Activated T-helper 1 cell treated with anti-CD3 and anti-CD28 coated beads, Interleukin-12 subunit alpha, Interleukin-12 subunit beta, Interleukin-2, Interleukin-4 antibody, amounts not matched to agents 30 ng/mL and 10 ng/mL and 1 ng/mL, durations not matched to agents 14 hours and 24 hours and 36 hours (primary cell): ENCODE measurements at regions of chrX and their contacts with region 1.

Region 1: GRCh38 chrX:73855546-73855945 is 292.5 kb downstream of the CHIC1 start:
- DNase-seq: peak; percentile 20
- H3K4me3 Mint-ChIP-seq: no peak overlapping the region
- H3K27ac Mint-ChIP-seq: no peak overlapping the region
- H3K4me1 Mint-ChIP-seq: no peaks in the 10 kb centered on the region
- H3K27me3 Mint-ChIP-seq: peaks cover 2% of the 10 kb centered on the region

Region 2: GRCh38 chrX:73525928-73526690 is 329.4 kb before region 1 on chrX:
- intact Hi-C with region 1: no loop called
- DNase-seq: no peak
- H3K4me3 Mint-ChIP-seq: no peak overlapping the region
- H3K27ac Mint-ChIP-seq: no peak overlapping the region
- H3K4me1 Mint-ChIP-seq: no peaks in the 10 kb centered on the region
- H3K27me3 Mint-ChIP-seq: peaks cover 3% of the 10 kb centered on the region

Region 3: GRCh38 chrX:74015379-74016019 is 160.0 kb after region 1 on chrX:
- intact Hi-C with region 1: loop called (anchors 1 kb)
- DNase-seq: peak; percentile 28
- H3K4me3 Mint-ChIP-seq: no peak overlapping the region
- H3K27ac Mint-ChIP-seq: no peak overlapping the region
- H3K4me1 Mint-ChIP-seq: peaks cover 9% of the 10 kb centered on the region
- H3K27me3 Mint-ChIP-seq: no peaks in the 10 kb centered on the region

Region 4: GRCh38 chrX:74133156-74133796 is 277.7 kb after region 1 on chrX:
- intact Hi-C with region 1: loop called (anchors 1 kb)
- DNase-seq: no peak
- H3K4me3 Mint-ChIP-seq: no peak overlapping the region
- H3K27ac Mint-ChIP-seq: no peak overlapping the region
- H3K4me1 Mint-ChIP-seq: no peaks in the 10 kb centered on the region
- H3K27me3 Mint-ChIP-seq: no peaks in the 10 kb centered on the region

Region 5: DNA sequence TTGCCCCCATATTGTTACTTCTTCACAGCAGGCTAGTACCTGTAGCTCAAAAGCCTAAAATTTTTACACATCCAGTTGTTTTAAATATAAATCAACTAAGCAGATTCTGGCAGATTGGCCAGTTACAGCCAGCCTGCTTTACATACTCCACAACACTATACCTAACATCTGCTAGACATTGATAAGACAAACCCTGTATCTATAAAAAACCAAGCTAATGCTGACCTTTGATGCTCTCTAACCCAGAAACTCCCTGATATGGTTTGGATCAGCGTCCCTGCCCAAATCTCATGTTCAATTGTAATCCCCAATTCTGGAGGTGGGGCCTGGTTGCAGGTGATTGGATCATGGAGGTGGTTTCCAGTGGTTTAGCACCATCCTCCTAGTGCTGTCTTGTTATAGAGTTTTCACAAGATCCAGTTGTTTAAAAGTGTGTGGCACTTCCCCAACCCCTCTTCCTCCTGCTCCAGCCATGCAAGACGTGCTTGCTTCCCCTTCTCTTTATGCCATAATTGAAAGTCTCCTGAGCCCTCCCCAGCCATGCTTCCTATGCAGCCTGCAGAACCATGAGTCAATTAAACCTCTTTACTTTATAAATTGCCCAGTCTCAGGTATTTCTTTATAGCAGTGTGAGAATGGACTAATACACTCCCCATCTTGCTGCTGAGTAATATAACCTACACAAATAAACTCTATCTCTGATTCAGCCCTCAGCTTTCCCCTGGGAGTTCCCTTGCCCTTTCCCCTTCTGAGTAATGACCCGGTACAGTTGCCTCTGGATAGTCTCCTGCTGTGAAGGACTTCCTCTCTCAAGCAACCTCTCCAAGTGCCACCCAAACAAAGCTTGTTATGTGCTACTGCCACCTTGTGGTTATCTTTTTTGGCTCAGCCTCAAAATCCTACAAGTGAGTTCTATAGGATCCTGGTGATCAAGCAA is 488.1 kb after region 1 on chrX:
- intact Hi-C with region 1: loop called (anchors 1 kb)
- DNase-seq: peak; percentile 21
- H3K4me3 Mint-ChIP-seq: no peak overlapping the region
- H3K27ac Mint-ChIP-seq: no peak overlapping the region
- H3K4me1 Mint-ChIP-seq: no peaks in the 10 kb centered on the region
- H3K27me3 Mint-ChIP-seq: no peaks in the 10 kb centered on the region

Region 6: DNA sequence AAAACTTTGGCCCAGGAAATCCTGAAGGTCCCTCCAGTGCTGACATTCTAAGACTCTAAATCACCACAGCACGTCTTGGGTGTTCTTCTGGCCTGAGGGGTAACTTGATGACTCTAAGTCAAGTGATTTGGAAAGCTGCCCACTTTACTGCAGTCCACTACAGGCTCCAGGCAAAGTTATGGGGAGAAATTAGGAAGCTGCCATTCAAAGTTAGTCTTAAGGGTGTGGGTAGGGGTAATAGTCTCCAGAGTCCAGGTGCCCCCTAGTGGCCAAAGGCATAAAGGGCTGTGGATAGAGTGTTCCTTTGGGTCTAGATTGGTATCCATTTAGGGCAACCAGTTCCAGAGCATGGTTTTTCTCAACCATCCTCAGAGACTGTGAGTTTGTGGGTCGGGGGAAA is 527.1 kb after region 1 on chrX:
- intact Hi-C with region 1: loop called (anchors 1 kb)
- DNase-seq: peak; percentile 7
- H3K4me3 Mint-ChIP-seq: no peak overlapping the region
- H3K27ac Mint-ChIP-seq: no peak overlapping the region
- H3K4me1 Mint-ChIP-seq: no peaks in the 10 kb centered on the region
- H3K27me3 Mint-ChIP-seq: no peaks in the 10 kb centered on the region

Region 7: DNA sequence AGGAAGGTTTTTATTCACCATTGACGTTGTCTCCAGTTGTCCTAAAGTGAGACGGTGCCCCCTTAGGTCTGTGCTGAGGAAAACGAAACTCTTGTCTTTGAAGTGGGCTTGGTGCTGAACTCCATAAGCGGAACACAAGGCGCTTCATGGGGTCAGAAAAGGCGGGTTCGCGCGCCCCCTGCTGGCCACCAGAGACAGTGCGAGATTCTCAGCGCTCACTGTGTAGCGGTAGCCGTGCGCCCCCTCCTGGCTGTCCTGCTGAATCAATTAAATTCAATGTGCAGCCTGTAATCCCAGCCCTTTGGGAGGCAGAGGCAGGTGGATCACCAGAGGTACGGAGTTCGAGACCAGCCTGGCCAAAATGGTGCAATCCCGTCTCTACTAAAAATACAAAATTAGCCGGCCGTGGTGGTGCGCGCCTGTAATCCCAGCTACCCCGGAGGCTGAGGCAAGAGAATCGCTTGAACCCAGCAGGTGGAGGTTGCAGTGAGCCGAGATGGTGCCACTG is 694.8 kb after region 1 on chrX:
- intact Hi-C with region 1: loop called (anchors 1 kb)
- DNase-seq: peak; percentile 66
- H3K4me3 Mint-ChIP-seq: no peak overlapping the region
- H3K27ac Mint-ChIP-seq: no peak overlapping the region
- H3K4me1 Mint-ChIP-seq: peaks cover 5% of the 10 kb centered on the region
- H3K27me3 Mint-ChIP-seq: no peaks in the 10 kb centered on the region